ENCODE measurements at regions of chr11 and their contacts with region 1.

Region 1: DNA sequence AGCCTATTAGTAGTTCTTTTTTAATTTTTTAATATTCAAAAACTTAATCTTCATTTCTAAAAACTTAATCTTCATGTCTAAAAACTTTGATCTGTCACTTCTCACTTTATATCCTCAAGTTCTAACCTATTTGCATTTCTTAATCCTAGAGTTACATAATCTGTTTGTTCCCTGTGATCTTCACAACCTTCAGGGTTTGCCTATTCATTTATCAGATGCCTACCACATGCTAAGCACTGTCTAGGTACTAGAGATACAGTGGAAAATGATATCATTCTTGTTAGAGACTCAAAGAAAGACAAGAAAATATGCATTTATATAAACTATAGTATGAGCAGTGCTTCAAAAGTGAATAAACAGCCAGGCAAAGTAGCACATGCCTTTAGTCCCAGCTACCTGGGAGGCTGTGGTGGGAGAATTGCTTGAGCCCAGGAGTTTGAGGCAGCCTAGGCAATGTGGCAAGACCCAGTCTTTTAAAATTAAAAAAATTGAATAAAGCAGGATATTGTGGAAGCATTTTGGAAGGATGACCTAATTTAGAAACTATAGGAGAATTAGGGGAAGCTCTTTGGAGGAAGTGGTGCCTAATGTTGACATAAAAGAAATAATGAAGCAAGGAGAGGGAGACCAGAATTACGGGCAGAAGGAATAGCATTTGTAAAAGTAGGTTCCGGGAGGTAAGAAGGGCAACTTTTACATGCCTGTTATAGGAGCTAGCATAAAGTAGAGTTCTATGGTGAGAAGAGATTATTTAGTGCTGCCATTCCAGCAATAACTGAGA is 54.4 kb upstream of the GRK2 start:
- DNase-seq: no peak
- ATAC-seq: peak in 2 of 4 donors; percentile 30 to 57
- H3K4me3 ChIP-seq: no peak overlapping the region
- H3K27ac ChIP-seq: peak overlapping the region in 1 of 4 donors; percentile 20
- H3K4me1 ChIP-seq: no peaks in the 10 kb centered on the region
- H3K27me3 ChIP-seq: no peaks in the 10 kb centered on the region
- CTCF ChIP-seq: no peak

Region 2: DNA sequence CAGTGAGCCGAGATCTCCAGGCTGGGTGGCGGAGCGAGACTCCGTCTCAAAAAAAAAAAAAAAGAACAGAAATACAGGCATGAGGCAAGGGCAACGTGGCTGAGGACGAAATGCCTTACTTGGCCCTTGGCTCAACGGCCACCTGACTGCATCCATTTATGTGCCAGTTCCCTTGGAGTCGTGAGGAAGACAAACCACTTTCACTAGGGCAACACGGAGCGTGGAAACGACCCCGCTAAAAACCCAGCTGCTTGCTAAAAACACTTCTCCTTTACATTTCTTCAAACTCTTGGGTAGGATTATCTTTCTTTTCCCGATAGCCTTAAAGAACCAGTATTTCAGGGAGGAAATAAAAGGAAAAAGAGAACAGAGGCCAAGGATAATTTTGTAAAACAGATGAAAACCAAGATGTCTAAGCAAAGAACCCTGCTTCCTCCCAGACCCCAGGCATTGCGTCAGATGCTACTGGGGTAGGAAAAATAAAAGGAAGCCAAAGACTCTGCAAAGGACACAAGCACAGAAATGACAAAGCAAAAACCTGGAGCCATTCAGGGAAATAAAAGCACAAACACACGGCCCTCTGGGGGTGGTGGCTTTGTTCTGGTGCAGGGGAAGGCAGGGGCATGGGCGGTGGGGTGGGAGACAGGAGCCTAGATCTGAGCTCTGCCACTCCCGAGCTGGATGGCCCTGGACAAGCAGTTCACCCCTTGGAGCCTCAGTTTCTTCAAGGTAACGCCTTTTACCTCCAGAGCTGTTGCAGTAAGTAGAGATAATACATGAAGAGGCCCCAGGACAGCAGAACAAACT is 290.7 kb before region 1 on chr11:
- intact Hi-C with region 1: no loop called
- DNase-seq: no peak
- ATAC-seq: peak in 1 of 4 donors; percentile 43
- H3K4me3 ChIP-seq: no peak overlapping the region
- H3K27ac ChIP-seq: no peak overlapping the region
- H3K4me1 ChIP-seq: no peaks in the 10 kb centered on the region
- H3K27me3 ChIP-seq: no peaks in the 10 kb centered on the region
- CTCF ChIP-seq: no peak

Region 3: GRCh38 chr11:67146516-67147226 is 65.2 kb before region 1 on chr11:
- intact Hi-C with region 1: loop called in 1 of 3 experiments (anchors 2 kb)
- DNase-seq: peak in 1 of 6 donors; percentile 16
- ATAC-seq: peak in 1 of 4 donors; percentile 32
- H3K4me3 ChIP-seq: no peak overlapping the region
- H3K27ac ChIP-seq: no peak overlapping the region
- H3K4me1 ChIP-seq: peaks cover 0 to 7% (median 4%) of the 10 kb centered on the region in 3 donors
- H3K27me3 ChIP-seq: no peaks in the 10 kb centered on the region
- CTCF ChIP-seq: no peak